Kidney (tissue), 22 donors: ENCODE measurements at regions of chr11 and their contacts with region 1.

Region 1: GRCh38 chr11:131867457-131868257 is 497.2 kb downstream of the NTM start:
- DNase-seq: peak; percentile 84 to 93 (median 87)
- H3K4me3 ChIP-seq: no peak overlapping the region
- H3K27ac ChIP-seq: no peak overlapping the region
- H3K4me1 ChIP-seq: no peaks in the 10 kb centered on the region
- H3K27me3 ChIP-seq: no peaks in the 10 kb centered on the region
- CTCF ChIP-seq: peak; percentile 77

Region 2: DNA sequence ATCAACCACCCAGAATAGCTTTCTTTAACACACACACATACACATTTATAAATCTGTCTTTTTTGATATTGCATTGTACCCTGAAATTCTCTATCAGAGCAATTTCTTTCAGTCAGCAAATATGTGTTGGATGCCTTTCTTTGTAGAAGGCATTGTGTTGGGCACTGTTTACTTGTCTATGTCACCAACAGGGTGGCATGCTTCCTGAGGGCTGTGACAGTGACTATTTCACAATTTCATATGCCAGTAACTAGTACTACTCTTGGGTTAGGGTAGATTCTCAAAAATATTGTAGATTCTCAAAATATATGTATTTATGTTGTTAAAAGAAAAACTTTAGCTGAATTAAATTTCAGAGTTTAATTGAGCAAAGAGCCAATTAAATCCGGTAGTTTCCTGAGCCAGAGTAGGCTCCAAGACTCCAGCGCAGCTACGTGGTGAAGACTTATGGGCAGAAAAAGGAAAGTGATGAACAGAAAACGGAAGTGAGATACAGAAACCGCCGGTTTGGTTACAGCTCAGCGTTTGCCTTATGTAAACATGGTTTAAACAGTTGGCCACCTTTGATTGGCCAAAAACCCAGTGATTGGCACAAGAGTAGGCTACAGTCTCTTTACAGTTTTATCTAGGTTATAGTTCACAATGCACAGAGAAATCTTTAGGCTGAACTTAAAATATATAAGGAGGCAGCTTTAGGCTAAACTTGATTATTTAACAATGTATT is 226.0 kb after region 1 on chr11:
- intact Hi-C with region 1: no loop called
- DNase-seq: no peak
- H3K4me3 ChIP-seq: no peak overlapping the region
- H3K27ac ChIP-seq: no peak overlapping the region
- H3K4me1 ChIP-seq: no peaks in the 10 kb centered on the region
- H3K27me3 ChIP-seq: no peaks in the 10 kb centered on the region
- CTCF ChIP-seq: no peak

Region 3: DNA sequence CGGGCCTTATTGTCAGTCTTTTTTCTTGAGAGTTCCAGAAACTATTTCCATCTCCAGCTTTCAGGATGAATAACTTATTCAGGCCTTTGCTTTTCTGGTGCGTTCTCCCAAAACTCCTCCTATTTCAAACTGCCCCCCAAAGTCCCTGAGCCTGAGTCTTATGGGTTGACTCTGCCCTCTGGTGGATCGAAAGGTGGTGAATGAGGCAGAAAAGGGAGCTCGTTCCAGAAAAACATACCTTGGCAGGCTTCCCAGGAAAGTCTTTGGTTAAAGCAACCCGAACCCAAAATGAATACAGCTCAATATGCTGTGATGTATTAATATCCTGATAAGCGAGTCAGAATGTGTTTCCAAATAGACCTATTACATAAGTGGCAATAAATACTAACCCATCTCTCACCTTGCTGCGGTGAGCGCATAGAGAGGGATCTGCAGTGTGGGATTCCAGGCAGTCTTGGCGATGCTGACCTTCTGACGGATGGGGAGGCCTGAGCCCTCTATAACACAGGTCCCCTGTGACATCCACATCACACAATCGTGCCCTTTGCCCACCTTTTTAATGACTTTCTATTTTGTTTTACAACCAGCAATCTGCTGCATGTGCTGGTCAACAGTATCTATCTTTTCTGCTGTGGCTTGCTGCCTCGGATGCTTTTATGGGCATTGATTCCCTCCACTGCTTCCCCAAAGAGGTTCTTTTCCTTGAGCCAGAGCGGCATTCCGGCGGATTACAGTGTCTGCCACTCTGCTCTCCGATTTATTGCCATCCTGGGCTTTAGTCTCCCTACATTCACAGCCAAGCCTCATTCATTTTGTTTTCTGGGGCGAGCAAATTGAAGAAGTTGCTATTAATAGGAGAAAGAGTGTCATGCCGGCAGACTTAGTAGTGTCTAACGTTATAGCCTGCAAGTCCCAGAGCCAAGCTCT is 259.6 kb after region 1 on chr11:
- intact Hi-C with region 1: loop called (anchors 10 kb)
- DNase-seq: peak in 3 of 5 donors; percentile 62 to 94 (median 83)
- H3K4me3 ChIP-seq: peak overlapping the region in 2 of 3 donors; percentile 42 to 51
- H3K27ac ChIP-seq: no peak overlapping the region
- H3K4me1 ChIP-seq: peaks cover 4 to 8% (median 6%) of the 10 kb centered on the region in 3 donors
- H3K27me3 ChIP-seq: no peaks in the 10 kb centered on the region
- CTCF ChIP-seq: peak; percentile 31

Region 4: DNA sequence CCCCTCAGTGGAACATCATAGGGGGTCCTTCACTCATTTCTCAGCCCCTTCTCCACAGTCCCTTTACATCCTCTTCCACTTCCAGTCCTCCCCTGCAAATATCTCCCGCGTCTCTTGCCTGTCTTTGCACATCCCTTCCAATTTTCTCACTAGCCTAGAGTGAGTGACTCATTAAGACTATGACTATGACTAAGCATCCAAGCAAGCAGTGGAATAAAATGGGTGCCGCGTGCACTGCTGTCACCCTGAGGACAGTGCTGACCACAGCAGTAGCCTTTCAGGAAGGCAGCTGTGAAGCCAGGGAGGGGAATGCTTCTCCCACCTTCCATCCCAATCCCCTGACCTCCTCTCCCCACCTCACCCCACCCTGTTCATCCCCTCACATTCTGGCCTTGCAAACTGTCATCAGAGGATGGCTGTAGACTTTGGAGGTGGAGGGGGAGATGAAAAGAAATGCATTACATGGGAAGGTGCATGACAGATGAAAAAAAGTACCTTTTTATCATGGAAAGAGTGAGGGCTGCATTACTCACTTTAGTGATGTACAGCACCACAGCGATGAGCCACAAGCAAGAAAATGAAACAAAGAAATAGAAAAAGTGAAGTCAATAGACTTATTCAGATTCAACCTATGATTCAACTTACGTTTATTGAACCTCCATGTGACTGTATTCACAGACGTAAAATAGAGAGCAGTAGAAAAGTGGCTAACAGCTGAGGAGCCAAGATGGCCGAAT is 450.9 kb after region 1 on chr11:
- intact Hi-C with region 1: no loop called
- DNase-seq: no peak
- H3K4me3 ChIP-seq: no peak overlapping the region
- H3K27ac ChIP-seq: no peak overlapping the region
- H3K4me1 ChIP-seq: no peaks in the 10 kb centered on the region
- H3K27me3 ChIP-seq: no peaks in the 10 kb centered on the region
- CTCF ChIP-seq: no peak